ENCODE measurements at regions of chr10 and their contacts with region 1.

Region 1: GRCh38 chr10:3761021-3761686 is 23.9 kb downstream of the KLF6 start:
- DNase-seq: no peak

Region 2: GRCh38 chr10:3239066-3239919 is 521.9 kb before region 1 on chr10:
- intact Hi-C with region 1: loop called in 1 of 2 experiments (anchors 5 kb)
- DNase-seq: peak; percentile 90

Region 3: DNA sequence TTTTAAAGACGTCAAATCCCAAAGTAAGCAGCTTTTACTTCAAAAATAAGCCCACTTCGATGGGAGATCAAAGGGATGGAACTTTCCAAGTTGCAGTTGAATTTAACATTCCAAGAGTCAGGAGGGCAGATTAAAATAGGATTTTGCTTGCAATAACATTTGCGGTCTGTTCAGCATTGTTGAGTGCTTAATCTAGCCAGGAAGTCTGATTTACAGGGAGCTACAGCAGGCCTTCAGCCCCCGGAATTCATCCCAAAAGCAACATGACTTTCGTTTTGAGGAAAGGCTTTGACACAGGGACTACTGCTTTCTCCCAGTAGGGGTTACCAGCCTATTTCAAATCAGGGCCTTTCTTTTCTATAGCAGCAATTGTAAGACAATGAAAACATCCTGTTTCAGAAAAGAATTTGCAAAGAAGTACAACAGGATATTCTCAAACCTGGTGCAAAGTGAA is 309.0 kb before region 1 on chr10:
- intact Hi-C with region 1: loop called (anchors 10 kb)
- DNase-seq: no peak

Region 4: GRCh38 chr10:3542185-3542611 is 219.0 kb before region 1 on chr10:
- intact Hi-C with region 1: loop called in 1 of 2 experiments (anchors 5 kb)
- DNase-seq: peak; percentile 91

Region 5: GRCh38 chr10:3625959-3626751 is 135.0 kb before region 1 on chr10:
- intact Hi-C with region 1: no loop called
- DNase-seq: no peak

Region 6: GRCh38 chr10:3866332-3866731 is 105.2 kb after region 1 on chr10:
- intact Hi-C with region 1: no loop called
- DNase-seq: no peak

Region 7: DNA sequence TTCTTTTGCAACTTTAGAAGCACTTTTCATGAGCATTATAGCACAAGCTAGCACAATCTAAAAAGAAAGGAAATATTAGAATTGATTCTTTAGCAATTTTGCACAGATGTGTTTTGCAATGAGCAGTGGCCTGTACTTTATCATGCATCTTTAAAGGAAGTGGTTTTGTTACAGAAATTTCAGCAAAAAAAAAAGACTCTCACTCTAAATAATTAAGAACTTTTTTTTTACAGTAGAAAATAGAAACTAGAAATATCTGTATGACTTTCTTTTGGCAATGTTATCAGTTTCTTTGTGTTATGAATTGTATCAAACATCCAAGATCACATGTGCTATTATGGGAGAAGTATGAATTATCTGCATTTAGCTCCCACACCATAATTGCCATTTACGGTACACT is 219.5 kb after region 1 on chr10:
- intact Hi-C with region 1: no loop called
- DNase-seq: no peak